CD8-positive, alpha-beta T cell (primary cell): ENCODE measurements at regions of chr3 and their contacts with region 1.

Region 1: DNA sequence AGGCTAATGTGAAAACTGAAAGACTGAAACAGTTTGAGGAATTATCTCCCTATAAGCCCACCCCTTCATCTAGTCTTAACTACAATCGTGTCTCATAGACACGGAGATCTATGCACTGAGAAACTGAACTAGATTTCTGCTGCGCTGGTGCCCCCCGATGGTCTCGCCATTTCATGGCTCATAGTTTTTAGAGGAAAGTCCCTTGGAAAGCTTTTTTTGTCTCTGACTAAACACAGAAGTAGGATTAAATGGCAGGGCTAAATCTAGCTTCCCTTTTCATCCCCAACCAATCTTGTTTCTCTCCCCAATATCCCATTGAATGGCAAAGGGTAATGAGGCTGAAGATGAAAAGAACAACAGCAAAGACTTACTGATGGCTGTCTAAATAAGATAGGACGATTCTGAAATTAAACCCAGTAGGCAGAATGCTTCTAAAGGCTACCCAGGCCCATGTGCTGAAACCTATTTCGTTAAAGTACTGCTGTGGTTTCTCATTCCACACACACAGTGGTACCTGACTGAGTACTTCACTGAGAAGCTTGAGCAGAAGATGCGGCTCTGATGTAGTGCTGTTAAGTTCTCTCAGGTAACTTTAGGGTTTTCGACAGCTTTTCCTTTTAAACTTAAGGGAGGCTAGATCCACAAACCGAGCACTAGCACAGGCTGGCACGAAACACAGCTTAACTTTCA is 142.7 kb downstream of the GADL1 start:
- DNase-seq: peak; percentile 25 to 76 (median 61)
- ATAC-seq: peak; percentile 73
- H3K4me3 ChIP-seq: no peak overlapping the region
- H3K4me3 Mint-ChIP-seq: no peak overlapping the region
- H3K27ac ChIP-seq: no peak overlapping the region
- H3K27ac Mint-ChIP-seq: no peak overlapping the region
- H3K4me1 ChIP-seq: no peaks in the 10 kb centered on the region
- H3K4me1 Mint-ChIP-seq: peaks cover 10% of the 10 kb centered on the region
- H3K27me3 ChIP-seq: no peaks in the 10 kb centered on the region
- H3K27me3 Mint-ChIP-seq: no peaks in the 10 kb centered on the region
- CTCF ChIP-seq: peak; percentile 55

Region 2: GRCh38 chr3:30012941-30013543 is 738.7 kb before region 1 on chr3:
- CTCF ChIA-PET with region 1: interaction called, 31 read pairs
- POLR2A ChIA-PET with region 1: no interaction called
- intact Hi-C with region 1: loop called in 1 of 2 experiments (anchors 1 kb)
- DNase-seq: peak; percentile 7 to 60 (median 53)
- ATAC-seq: no peak
- H3K4me3 ChIP-seq: no peak overlapping the region
- H3K4me3 Mint-ChIP-seq: no peak overlapping the region
- H3K27ac ChIP-seq: no peak overlapping the region
- H3K27ac Mint-ChIP-seq: no peak overlapping the region
- H3K4me1 ChIP-seq: no peaks in the 10 kb centered on the region
- H3K4me1 Mint-ChIP-seq: no peaks in the 10 kb centered on the region
- H3K27me3 ChIP-seq: no peaks in the 10 kb centered on the region
- H3K27me3 Mint-ChIP-seq: peaks cover 5% of the 10 kb centered on the region
- CTCF ChIP-seq: peak; percentile 72

Region 3: GRCh38 chr3:30112902-30113484 is 638.8 kb before region 1 on chr3:
- CTCF ChIA-PET with region 1: interaction called, 49 read pairs
- POLR2A ChIA-PET with region 1: interaction called, 3 read pairs
- intact Hi-C with region 1: loop called (anchors 1 kb)
- DNase-seq: peak in 2 of 9 experiments; percentile 43 to 61
- ATAC-seq: no peak
- H3K4me3 ChIP-seq: no peak overlapping the region
- H3K4me3 Mint-ChIP-seq: no peak overlapping the region
- H3K27ac ChIP-seq: no peak overlapping the region
- H3K27ac Mint-ChIP-seq: no peak overlapping the region
- H3K4me1 ChIP-seq: no peaks in the 10 kb centered on the region
- H3K4me1 Mint-ChIP-seq: peaks cover 6% of the 10 kb centered on the region
- H3K27me3 ChIP-seq: no peaks in the 10 kb centered on the region
- H3K27me3 Mint-ChIP-seq: no peaks in the 10 kb centered on the region
- CTCF ChIP-seq: peak; percentile 78

Region 4: DNA sequence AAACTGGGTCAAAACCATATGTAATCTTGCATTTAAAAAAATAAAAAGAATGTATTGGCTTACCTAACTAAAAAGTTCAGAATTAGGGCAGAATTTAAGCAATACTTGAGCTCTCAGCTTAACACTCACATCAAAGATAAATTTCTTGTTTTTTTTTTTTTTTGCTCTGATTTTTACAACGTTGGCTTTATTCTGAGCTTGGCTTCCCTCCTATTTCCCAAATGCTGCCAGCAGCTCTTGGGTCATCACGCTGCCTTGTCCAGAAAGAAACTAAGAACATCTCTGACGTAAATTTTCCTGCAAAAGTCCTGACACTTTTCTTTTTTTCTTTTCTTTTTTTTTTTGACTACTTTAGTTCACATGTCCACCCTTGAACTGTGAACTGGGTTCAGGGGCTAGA is 295.9 kb before region 1 on chr3:
- CTCF ChIA-PET with region 1: no interaction called
- POLR2A ChIA-PET with region 1: no interaction called
- intact Hi-C with region 1: no loop called
- DNase-seq: no peak
- ATAC-seq: no peak
- H3K4me3 ChIP-seq: no peak overlapping the region
- H3K4me3 Mint-ChIP-seq: no peak overlapping the region
- H3K27ac ChIP-seq: no peak overlapping the region
- H3K27ac Mint-ChIP-seq: peak overlapping the region; percentile 53
- H3K4me1 ChIP-seq: peaks cover 13% of the 10 kb centered on the region
- H3K4me1 Mint-ChIP-seq: peaks cover 22% of the 10 kb centered on the region
- H3K27me3 ChIP-seq: no peaks in the 10 kb centered on the region
- H3K27me3 Mint-ChIP-seq: no peaks in the 10 kb centered on the region
- CTCF ChIP-seq: no peak

Region 5: GRCh38 chr3:30733209-30733608 is 18.5 kb before region 1 on chr3:
- CTCF ChIA-PET with region 1: interaction called, 17 read pairs
- POLR2A ChIA-PET with region 1: no interaction called
- intact Hi-C with region 1: no loop called
- DNase-seq: no peak
- ATAC-seq: no peak
- H3K4me3 ChIP-seq: no peak overlapping the region
- H3K4me3 Mint-ChIP-seq: no peak overlapping the region
- H3K27ac ChIP-seq: no peak overlapping the region
- H3K27ac Mint-ChIP-seq: no peak overlapping the region
- H3K4me1 ChIP-seq: peaks cover 37% of the 10 kb centered on the region
- H3K4me1 Mint-ChIP-seq: peaks cover 57% of the 10 kb centered on the region
- H3K27me3 ChIP-seq: no peaks in the 10 kb centered on the region
- H3K27me3 Mint-ChIP-seq: no peaks in the 10 kb centered on the region
- CTCF ChIP-seq: no peak